Endothelial cell of umbilical vein (primary cell): ENCODE measurements at regions of chr3 and their contacts with region 1.

Region 1: DNA sequence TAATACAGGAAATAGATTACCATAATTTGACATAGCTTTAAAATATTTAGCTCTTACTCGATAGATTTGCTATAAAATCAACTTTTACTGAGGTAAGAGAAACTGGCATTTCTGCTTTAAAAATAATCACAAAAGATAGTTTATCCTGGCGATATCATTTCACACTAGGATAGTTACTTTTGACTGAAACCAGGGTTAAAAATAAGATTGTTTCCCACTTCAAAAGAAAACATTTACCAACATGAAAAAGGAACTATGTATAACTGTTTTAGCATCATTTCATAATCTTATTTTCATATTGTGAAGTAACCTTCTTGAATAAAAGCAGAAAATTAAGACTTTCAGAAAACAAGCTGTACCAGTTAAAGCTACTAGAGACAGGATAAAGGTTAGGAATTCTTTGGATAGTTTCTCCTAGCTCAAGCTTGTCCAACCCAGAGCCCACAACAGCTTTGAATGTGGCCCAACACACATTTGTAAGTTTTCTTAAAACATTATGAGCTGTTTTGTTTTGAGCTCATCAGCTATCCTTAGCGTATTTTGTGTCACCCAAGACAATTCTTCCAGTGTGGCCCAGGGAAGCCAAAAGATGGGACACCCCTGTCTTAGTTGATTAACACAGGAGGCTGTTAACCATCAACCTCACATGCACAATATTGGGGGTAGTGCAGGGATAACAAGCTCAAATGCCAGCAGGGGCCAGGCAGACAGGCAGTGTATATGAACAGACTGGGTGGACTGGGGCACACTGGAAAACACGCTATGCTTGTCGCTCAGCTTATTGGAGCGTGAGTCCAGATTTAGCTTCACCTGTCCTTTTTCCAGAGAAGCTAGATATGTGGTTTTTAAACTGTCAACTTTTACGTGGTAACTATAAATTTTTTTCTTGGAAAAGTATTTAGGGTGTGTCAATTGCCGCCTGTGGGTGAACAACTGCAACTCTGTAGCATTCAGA is 15.0 kb downstream of the PSMD6 start:
- DNase-seq: no peak
- H3K4me3 ChIP-seq: no peak overlapping the region
- H3K27ac ChIP-seq: no peak overlapping the region
- H3K4me1 ChIP-seq: peaks cover 5% of the 10 kb centered on the region
- H3K27me3 ChIP-seq: no peaks in the 10 kb centered on the region
- CTCF ChIP-seq: no peak
- POLR2A ChIP-seq: no peak

Region 2: DNA sequence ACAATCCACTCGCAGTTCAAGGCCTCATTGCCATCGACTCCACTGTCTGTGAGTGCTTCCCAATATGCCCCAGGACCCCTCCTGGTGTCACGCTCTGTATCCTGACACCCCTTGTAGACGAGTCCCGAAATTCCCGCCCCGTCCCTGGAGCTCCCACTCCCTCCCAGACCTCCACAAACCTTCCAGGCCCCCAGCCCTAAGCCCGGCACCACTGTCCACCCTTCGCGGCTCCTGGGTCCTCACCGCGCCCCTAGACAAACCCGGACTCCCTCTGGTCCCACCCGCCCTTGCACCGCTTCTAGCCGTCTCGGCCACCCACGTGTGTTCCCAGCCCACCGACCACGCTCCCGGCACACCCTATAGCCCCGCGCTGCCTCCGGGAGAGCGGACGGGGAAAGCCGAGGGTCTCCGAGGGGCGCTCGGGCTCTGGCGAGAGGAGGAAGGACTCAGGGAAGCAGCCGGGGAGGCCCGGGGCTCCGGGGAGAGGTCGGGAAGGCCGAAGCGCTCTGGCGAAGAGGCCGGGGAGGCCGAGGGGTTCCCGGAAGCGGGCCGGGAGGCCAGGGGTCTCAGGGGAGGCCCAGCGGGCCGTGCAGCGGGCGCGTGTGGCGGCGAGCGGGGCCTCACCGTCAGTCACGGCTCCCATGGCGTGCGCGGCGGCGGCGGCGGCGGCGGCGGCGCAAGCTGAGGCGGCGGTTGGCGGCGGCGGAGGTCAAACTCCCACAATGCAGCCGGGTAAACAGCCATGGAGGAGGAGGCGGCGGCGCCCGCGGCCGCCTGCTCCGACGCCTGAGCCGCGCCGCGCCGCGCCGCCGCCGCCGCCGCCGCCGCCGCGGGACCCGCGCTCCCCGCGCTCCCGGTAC is 144.9 kb before region 1 on chr3 and contains the starts of genes ATXN7 and THOC7:
- CTCF ChIA-PET with region 1: no interaction called
- POLR2A ChIA-PET with region 1: no interaction called
- dilution Hi-C with region 1: no loop called
- intact Hi-C with region 1: loop called (anchors 5 kb)
- DNase-seq: peak; percentile 50
- H3K4me3 ChIP-seq: peak within 1 kb of the TSS; percentile 42 to 99 (median 68)
- H3K27ac ChIP-seq: peak within 1 kb of the TSS; percentile 75
- H3K4me1 ChIP-seq: peaks cover 12% of the 10 kb centered on the region
- H3K27me3 ChIP-seq: no peaks in the 10 kb centered on the region
- CTCF ChIP-seq: no peak
- POLR2A ChIP-seq: no peak
- total RNA-seq, gene ATXN7: 27.1 and 34.7 TPM in 2 replicates
- total RNA-seq, gene THOC7: 68.7 and 69.4 TPM in 2 replicates